ENCODE measurements at regions of chrX and their contacts with region 1.

Region 1: GRCh38 chrX:7925867-7926472 is 1.2 kb downstream of the PNPLA4 start:
- DNase-seq: peak; percentile 23 to 37
- ATAC-seq: peak in 6 of 8 donors; percentile 39 to 58 (median 46)
- H3K4me3 ChIP-seq: no peak overlapping the region
- H3K27ac ChIP-seq: no peak overlapping the region
- H3K4me1 ChIP-seq: peaks cover 0 to 24% (median 3%) of the 10 kb centered on the region in 9 donors
- H3K27me3 ChIP-seq: no peaks in the 10 kb centered on the region
- CTCF ChIP-seq: peak; percentile 31 to 79 (median 61)

Region 2: DNA sequence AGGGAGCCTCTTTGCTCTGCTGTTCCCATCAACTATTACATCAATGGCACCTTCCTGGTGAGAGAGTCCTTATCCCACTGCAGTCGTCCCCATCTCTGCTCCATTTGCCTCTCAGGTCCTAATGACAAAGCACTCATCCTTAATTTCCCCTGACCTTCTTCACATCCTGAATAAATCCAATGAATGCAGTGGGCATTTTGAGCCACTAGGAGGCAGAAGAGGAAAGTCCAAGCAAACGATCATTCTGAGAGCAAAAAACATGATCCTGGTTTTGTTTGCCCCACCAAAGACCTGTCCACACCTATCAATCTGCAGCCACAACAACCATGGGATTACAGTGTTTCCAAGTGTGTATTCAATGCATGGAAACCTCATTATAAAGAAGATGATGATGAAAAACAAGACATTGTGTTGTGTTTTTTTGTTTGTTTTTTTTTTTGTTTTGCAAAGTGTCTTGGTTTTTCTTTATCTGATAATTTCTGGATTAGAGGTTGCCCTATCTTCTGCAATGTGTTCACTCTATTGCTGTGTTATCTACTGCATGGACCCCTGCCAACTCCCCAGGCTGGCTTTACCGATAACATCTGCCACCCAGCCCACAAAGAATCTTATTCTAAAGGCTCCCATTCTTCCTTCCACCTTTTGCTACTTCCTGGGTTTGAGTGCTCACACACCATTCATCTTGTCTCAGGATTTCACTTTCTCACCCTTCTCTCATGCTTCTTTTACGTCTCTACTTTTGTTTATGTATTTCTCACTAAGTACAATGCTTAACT is 1904.5 kb before region 1 on chrX:
- intact Hi-C with region 1: loop called in 1 of 10 experiments (anchors 5 kb)
- DNase-seq: no peak
- ATAC-seq: no peak
- H3K4me3 ChIP-seq: no peak overlapping the region
- H3K27ac ChIP-seq: no peak overlapping the region
- H3K4me1 ChIP-seq: no peaks in the 10 kb centered on the region
- H3K27me3 ChIP-seq: no peaks in the 10 kb centered on the region
- CTCF ChIP-seq: peak in 8 of 9 donors; percentile 24 to 59 (median 47)

Region 3: DNA sequence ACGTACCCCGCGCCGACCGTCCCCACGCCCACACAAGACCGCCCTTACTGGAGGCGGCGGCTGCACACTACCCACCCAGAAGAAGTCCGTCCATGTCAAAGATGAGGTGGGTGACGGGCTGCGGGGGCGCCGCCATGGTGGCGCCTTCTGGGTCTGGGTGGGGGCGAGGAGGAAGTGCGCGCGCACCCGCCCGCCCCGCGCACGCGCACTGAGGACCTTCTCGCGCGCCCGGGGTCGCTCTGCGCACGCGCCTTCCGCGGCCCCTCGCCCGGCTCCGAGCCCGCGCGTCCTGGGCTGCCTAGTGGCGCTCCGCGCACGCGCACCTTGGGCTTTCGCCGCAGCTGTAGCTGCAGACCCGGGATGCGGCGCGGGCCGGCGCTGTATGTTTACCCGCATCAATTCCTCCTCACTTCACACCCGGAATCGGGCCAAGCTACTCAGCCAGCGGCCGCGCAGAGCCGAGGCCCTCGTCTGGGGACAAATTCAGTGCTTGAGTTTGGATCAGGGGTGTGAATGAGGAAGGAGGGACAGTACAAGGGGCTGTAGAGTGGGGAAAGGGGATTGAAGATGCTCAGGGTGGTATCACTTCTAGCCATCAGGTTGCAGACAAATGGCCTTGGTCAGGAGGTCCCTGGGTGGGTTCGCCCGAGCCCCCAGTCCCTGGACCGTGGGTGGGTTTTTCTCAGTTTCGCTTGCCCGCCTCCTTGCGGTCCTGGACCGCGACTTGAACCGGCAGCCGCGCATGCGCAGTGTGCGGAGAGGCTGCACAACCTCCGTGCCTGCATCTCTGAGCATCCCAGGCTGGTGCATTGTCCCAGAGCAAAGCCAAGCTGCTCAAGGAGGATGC is 777.8 kb before region 1 on chrX and contains the start of gene PUDP:
- intact Hi-C with region 1: loop called in 1 of 10 experiments (anchors 10 kb)
- DNase-seq: peak; percentile 73 to 87
- ATAC-seq: peak; percentile 96 to 99 (median 97)
- H3K4me3 ChIP-seq: peak within 1 kb of the TSS; percentile 67 to 91 (median 76)
- H3K27ac ChIP-seq: peak within 1 kb of the TSS; percentile 77 to 97 (median 92)
- H3K4me1 ChIP-seq: peaks cover 0 to 31% (median 8%) of the 10 kb centered on the region in 9 donors
- H3K27me3 ChIP-seq: no peaks in the 10 kb centered on the region
- CTCF ChIP-seq: peak in 7 of 9 donors; percentile 3 to 61 (median 30)
- total RNA-seq, gene PUDP: 17.1 to 27.0 (median 22.9) TPM

Region 4: GRCh38 chrX:7720519-7720918 is 205.5 kb before region 1 on chrX:
- intact Hi-C with region 1: loop called in 1 of 10 experiments (anchors 10 kb)
- DNase-seq: no peak
- ATAC-seq: no peak
- H3K4me3 ChIP-seq: no peak overlapping the region
- H3K27ac ChIP-seq: no peak overlapping the region
- H3K4me1 ChIP-seq: no peaks in the 10 kb centered on the region
- H3K27me3 ChIP-seq: no peaks in the 10 kb centered on the region
- CTCF ChIP-seq: no peak